ENCODE measurements at regions of chr10 and their contacts with region 1.

Region 1: GRCh38 chr10:29857843-29858701 is 201.3 kb downstream of the JCAD start:
- DNase-seq: peak; percentile 60
- H3K4me3 ChIP-seq: no peak overlapping the region
- H3K27ac ChIP-seq: peak overlapping the region; percentile 44 to 79 (median 62)
- H3K4me1 ChIP-seq: peaks cover 0 to 12% (median 7%) of the 10 kb centered on the region in 4 donors
- H3K27me3 ChIP-seq: no peaks in the 10 kb centered on the region
- CTCF ChIP-seq: peak; percentile 51 to 73 (median 61)
- EP300 ChIP-seq: no peak
- POLR2A ChIP-seq: no peak

Region 2: DNA sequence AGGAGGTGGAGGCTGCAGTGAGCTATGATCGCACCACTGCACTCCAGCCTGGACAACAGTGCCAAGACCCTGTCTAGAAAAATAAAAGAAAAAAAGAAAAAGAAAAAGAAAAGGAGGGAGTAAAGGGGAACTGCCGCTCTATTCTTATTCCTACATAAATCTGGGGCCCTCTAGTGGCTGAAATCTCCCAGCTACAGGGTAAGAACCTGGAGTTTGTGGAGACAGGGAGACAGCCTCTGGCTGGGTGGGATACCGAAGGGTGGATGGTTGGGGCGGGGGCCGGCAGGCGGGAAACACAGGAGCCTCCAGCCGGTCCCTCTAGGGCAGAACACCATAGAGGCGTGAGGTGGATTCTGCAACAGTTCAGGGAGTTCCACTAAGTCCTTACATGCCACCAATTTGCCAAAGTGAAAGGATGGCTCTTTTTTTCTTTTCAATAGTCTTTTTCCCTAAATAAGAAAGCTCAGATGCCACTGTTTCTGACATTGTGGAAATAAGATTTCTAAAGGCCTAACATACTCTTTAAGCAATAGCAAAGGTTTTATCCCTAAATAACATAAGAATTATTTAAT is 340.6 kb before region 1 on chr10:
- in situ Hi-C with region 1: loop called in 1 of 4 experiments (anchors 25 kb)
- intact Hi-C with region 1: no loop called
- DNase-seq: peak; percentile 26
- H3K4me3 ChIP-seq: no peak overlapping the region
- H3K27ac ChIP-seq: peak overlapping the region; percentile 0 to 77 (median 44)
- H3K4me1 ChIP-seq: peaks cover 0 to 21% (median 2%) of the 10 kb centered on the region in 4 donors
- H3K27me3 ChIP-seq: no peaks in the 10 kb centered on the region
- CTCF ChIP-seq: peak; percentile 29 to 56 (median 45)
- EP300 ChIP-seq: no peak
- POLR2A ChIP-seq: no peak

Region 3: GRCh38 chr10:29735596-29736318 is 122.3 kb before region 1 on chr10:
- in situ Hi-C with region 1: no loop called
- intact Hi-C with region 1: loop called (anchors 5 kb)
- DNase-seq: peak; percentile 92
- H3K4me3 ChIP-seq: peak overlapping the region; percentile 66 to 96 (median 84)
- H3K27ac ChIP-seq: peak overlapping the region; percentile 95 to 99 (median 96)
- H3K4me1 ChIP-seq: peaks cover 5 to 45% (median 16%) of the 10 kb centered on the region in 4 donors
- H3K27me3 ChIP-seq: no peaks in the 10 kb centered on the region
- CTCF ChIP-seq: peak; percentile 89 to 98 (median 95)
- EP300 ChIP-seq: no peak
- POLR2A ChIP-seq: peak; percentile 67

Region 4: GRCh38 chr10:29969255-29970011 is 111.4 kb after region 1 on chr10:
- in situ Hi-C with region 1: no loop called
- intact Hi-C with region 1: loop called (anchors 10 kb)
- DNase-seq: no peak
- H3K4me3 ChIP-seq: no peak overlapping the region
- H3K27ac ChIP-seq: peak overlapping the region in 1 of 4 donors; percentile 32
- H3K4me1 ChIP-seq: peaks cover 0 to 6% (median 2%) of the 10 kb centered on the region in 4 donors
- H3K27me3 ChIP-seq: no peaks in the 10 kb centered on the region
- CTCF ChIP-seq: no peak
- EP300 ChIP-seq: no peak
- POLR2A ChIP-seq: no peak

Measured in transverse colon (tissue), 4 donors.